ENCODE measurements at regions of chr2 and their contacts with region 1.

Region 1: GRCh38 chr2:238263204-238264071 is 23.6 kb upstream of the HES6 start:
- DNase-seq: peak; percentile 59
- H3K4me3 ChIP-seq: no peak overlapping the region
- CTCF ChIP-seq: peak; percentile 84

Region 2: GRCh38 chr2:237858294-237859081 is 404.9 kb before region 1 on chr2:
- CTCF ChIA-PET with region 1: interaction called, 166 read pairs
- POLR2A ChIA-PET with region 1: no interaction called
- DNase-seq: peak; percentile 33
- H3K4me3 ChIP-seq: no peak overlapping the region; the same call in 1 of the 2 replicates
- CTCF ChIP-seq: peak; percentile 94

Region 3: DNA sequence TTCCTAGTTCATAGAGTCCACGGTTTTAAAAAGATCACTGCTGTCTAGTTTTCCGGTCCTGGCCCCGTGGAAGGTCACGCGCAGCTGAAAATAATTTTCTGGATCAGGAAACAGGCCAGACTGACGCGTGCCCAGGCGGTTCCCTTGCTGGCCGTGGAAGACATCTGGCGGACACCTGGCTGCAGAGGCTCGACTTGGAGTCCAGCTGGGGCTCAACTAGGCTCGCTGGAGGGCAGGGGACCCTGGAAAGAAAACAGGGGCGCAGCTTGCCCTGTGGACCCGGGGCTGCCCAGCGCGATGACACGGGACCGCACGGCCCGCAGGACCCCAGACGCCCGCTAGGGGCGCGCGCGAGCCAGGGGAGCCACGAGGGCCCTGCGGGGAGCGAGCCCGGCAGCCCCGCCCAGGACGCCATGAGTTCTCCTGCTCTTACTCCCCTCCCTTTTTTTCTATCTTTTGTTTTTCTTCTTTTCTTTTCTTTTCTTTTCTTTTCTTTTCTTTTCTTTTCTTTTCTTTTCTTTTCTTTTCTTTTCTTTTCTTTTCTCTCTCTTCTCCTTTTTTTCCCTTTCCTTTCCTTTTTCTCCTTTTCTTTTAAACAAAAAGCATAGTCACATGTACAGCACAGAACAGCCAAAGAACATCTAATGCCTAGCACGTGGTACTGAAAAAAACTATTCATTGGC is 339.8 kb before region 1 on chr2:
- CTCF ChIA-PET with region 1: interaction called, 18 read pairs
- POLR2A ChIA-PET with region 1: no interaction called
- DNase-seq: no peak
- H3K4me3 ChIP-seq: peak overlapping the region; percentile 43
- CTCF ChIP-seq: peak; percentile 95

Region 4: GRCh38 chr2:238030422-238031154 is 232.8 kb before region 1 on chr2:
- CTCF ChIA-PET with region 1: no interaction called
- POLR2A ChIA-PET with region 1: no interaction called
- DNase-seq: no peak
- H3K4me3 ChIP-seq: no peak overlapping the region
- CTCF ChIP-seq: no peak

Region 5: DNA sequence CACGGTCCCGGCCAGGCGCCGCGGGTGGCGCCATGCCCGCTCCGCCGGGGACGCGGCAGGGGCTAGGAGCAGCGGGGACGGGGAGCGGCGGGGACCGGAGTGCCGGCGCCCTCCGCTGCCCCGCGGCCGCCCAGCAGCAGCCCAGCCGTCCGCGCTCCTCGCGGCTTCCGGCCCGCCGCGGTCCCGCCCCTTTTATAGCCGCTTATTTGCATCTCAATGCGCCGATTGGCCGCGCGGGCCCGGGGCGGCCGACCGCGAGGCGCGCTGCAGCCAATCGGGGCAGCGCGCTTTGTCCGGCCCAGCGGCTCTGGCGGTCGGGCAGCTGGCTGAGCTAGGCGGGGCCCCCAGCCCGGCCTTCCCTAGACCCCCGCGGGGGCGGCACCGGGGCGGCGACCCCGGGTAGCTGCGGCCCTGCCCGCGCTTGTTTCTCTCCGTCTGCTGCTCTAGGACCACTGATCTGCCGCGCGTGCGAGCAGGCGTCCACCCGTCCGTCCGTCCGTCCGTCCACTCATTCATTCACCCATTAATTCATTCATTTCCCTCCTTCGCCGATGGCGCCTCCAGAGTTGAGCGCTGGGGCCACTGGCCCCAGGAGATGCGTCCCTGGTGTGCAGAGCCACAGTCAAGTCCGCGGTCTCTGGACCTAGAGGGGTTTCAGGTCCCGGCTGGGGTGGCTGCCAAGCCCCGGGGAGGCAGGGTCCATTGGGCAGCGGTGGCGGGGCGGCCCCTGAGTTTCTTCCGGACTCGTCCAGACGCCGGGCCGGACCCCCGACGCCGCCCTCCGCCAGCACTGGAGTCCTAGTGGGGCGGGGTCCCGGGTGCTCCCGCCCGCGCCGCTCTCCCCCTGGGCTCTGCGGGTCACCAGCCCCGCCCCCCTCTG is 23.3 kb before region 1 on chr2 and contains the start of gene HES6:
- CTCF ChIA-PET with region 1: interaction called, 223 read pairs
- POLR2A ChIA-PET with region 1: no interaction called
- DNase-seq: no peak
- H3K4me3 ChIP-seq: peak within 1 kb of the TSS; percentile 59
- CTCF ChIP-seq: no peak

Region 6: GRCh38 chr2:238287737-238288649 is 24.6 kb after region 1 on chr2 and contains the start of gene PER2:
- CTCF ChIA-PET with region 1: interaction called, 148 read pairs
- POLR2A ChIA-PET with region 1: no interaction called
- DNase-seq: peak; percentile 69
- H3K4me3 ChIP-seq: peak within 1 kb of the TSS; percentile 83
- CTCF ChIP-seq: peak; percentile 21

Measured in AG04449 (cell line).